Caco-2 (cell line): ENCODE measurements at regions of chr11 and their contacts with region 1.

Region 1: GRCh38 chr11:35525501-35526175 is at the start of gene PAMR1:
- DNase-seq: peak; percentile 67 to 69
- H3K4me3 ChIP-seq: peak within 1 kb of the TSS; percentile 38
- H3K4me3 Mint-ChIP-seq: peak within 1 kb of the TSS; percentile 75
- H3K27ac Mint-ChIP-seq: peak within 1 kb of the TSS; percentile 21
- H3K4me1 ChIP-seq: peaks cover 18% of the 10 kb centered on the region
- H3K4me1 Mint-ChIP-seq: peaks cover 18% of the 10 kb centered on the region
- H3K27me3 ChIP-seq: no peaks in the 10 kb centered on the region
- H3K27me3 Mint-ChIP-seq: peaks cover 4% of the 10 kb centered on the region
- CTCF ChIP-seq: no peak
- total RNA-seq, gene PAMR1: 12.9 and 17.9 TPM in 2 replicates

Region 2: DNA sequence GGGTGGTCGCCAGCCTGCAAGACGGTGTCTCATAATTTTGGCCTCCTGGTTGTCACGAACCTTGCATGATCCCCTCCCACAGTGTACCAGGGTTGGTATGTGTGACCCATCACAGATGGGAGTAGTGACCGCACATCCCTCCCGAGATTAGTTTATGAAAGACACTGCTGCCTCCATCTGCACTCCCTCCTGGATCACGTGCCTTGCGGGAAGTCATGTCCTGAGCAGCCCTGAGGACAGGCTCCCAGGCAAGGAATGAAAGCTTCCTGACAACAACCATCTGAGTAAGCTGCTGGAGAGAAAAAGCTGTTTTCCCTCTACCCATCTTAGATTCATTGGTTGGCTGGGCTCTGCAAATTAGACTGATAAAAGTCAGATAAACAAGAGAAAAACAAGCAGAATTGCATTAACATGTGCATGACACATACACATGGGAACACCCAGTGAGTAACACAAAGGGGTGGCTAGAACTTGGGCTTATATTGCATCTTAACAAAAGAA is 14.2 kb after region 1 on chr11:
- CTCF ChIA-PET with region 1: no interaction called
- POLR2A ChIA-PET with region 1: no interaction called
- intact Hi-C with region 1: loop called (anchors 1 kb)
- DNase-seq: peak; percentile 58 to 77
- H3K4me3 ChIP-seq: no peak overlapping the region
- H3K4me3 Mint-ChIP-seq: peak overlapping the region; percentile 30
- H3K27ac Mint-ChIP-seq: peak overlapping the region; percentile 46
- H3K4me1 ChIP-seq: peaks cover 53% of the 10 kb centered on the region
- H3K4me1 Mint-ChIP-seq: peaks cover 35% of the 10 kb centered on the region
- H3K27me3 ChIP-seq: no peaks in the 10 kb centered on the region
- H3K27me3 Mint-ChIP-seq: no peaks in the 10 kb centered on the region
- CTCF ChIP-seq: no peak